ENCODE measurements at regions of chr16 and their contacts with region 1.

Region 1: DNA sequence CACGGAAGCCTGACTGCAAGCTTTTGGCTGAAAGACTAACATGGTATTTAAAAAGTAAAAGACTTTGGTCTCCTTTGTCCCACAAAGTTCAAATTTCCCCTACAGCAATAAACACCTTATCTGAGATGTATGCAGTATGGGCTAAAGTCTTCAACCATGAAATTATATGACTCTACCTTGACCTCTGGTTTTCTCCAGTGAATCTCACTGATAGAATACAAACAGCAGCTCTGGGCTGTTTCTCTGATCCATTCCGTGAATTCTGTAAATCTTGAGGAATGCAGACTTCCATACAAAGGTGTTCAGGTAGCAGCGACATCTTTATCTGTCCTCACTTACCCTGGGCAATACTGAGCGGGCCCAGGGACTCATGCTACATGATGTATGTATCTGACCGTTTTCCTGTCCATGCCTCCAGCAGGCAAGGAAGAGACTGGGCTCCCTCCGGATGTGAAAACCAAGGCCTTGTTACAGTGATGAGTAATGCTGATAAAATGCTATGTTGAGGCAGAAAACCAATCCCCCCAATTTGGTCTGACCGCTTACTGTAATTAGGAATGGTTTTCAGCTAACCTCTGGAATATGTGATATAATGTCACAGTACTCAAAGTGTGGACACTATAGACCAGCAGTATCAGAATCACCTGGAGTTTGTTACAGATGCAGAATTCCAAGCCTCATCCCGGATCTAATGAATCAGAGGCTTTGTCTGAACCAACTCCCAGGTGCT is 589.8 kb downstream of the HS3ST4 start:
- DNase-seq: no peak
- ATAC-seq: no peak
- H3K4me3 Mint-ChIP-seq: no peak overlapping the region
- H3K27ac Mint-ChIP-seq: no peak overlapping the region
- H3K4me1 Mint-ChIP-seq: no peaks in the 10 kb centered on the region
- H3K27me3 Mint-ChIP-seq: no peaks in the 10 kb centered on the region

Region 2: DNA sequence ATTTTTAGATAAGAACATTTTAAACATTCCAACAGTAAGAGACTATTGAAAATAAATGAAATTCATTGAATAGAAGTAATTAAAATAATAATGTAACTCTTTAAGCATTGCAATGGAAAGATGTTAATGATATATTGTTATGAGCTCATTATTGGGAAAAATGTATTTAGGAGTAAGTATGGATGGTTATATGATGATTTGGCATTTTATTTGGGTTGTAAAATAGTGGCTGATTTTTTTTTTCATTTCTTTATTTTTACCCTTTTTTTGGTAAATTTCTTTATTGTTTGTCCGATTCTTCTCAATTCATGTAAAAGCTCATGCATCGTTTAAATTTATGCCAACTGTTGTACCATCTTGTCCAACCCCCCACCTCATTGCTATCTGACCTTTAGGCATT is 49.9 kb before region 1 on chr16:
- CTCF ChIA-PET with region 1: no interaction called
- POLR2A ChIA-PET with region 1: no interaction called
- intact Hi-C with region 1: no loop called
- DNase-seq: no peak
- ATAC-seq: no peak
- H3K4me3 Mint-ChIP-seq: no peak overlapping the region
- H3K27ac Mint-ChIP-seq: no peak overlapping the region
- H3K4me1 Mint-ChIP-seq: no peaks in the 10 kb centered on the region
- H3K27me3 Mint-ChIP-seq: peaks cover 12% of the 10 kb centered on the region

Region 3: GRCh38 chr16:26301516-26301915 is 20.0 kb after region 1 on chr16:
- CTCF ChIA-PET with region 1: no interaction called
- POLR2A ChIA-PET with region 1: interaction called, 14 read pairs
- intact Hi-C with region 1: no loop called
- DNase-seq: peak; percentile 6
- ATAC-seq: peak; percentile 47
- H3K4me3 Mint-ChIP-seq: no peak overlapping the region
- H3K27ac Mint-ChIP-seq: no peak overlapping the region
- H3K4me1 Mint-ChIP-seq: peaks cover 4% of the 10 kb centered on the region
- H3K27me3 Mint-ChIP-seq: peaks cover 9% of the 10 kb centered on the region

Measured in activated CD4-positive, alpha-beta T cell treated with anti-CD3 and anti-CD28 coated beads for 36 hours (primary cell).